Ovary (tissue), 10 donors: ENCODE measurements at regions of chr2 and their contacts with region 1.

Region 1: DNA sequence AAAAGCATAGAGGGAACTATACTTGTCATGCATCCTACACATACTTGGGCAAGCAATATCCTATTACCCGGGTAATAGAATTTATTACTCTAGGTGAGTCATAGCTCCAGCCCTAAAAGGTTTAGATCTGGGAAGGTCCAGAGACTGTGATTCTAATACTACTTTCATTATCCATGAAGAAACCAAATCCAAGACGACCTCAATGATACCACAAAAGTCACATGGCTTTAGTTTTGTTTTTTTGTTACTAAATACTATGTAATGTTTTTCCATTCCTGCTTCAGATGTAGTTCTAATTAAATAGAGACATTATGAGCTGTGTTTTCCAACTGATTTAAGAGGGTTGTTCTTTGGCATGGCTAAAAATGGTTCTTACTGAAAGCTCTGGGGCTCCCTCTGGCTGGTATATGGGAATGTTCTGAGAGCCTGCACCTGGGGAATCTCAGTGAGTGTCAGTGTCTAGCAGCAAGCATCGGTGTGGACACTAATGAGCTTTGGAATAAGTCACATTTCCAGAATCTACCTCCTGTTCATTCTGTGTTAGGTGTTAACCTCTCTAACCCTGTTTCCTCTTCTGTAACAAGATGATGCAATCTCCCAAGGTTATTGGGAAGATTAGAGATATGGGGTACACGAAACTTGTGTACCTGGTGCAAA is 20.5 kb upstream of the IL1RL2 start:
- DNase-seq: peak in 4 of 5 donors; percentile 30 to 64 (median 41)
- H3K4me3 ChIP-seq: no peak overlapping the region
- H3K27ac ChIP-seq: no peak overlapping the region
- H3K4me1 ChIP-seq: no peaks in the 10 kb centered on the region
- H3K27me3 ChIP-seq: no peaks in the 10 kb centered on the region
- CTCF ChIP-seq: peak; percentile 14 to 76 (median 65)
- EP300 ChIP-seq: no peak
- POLR2A ChIP-seq: no peak

Region 2: DNA sequence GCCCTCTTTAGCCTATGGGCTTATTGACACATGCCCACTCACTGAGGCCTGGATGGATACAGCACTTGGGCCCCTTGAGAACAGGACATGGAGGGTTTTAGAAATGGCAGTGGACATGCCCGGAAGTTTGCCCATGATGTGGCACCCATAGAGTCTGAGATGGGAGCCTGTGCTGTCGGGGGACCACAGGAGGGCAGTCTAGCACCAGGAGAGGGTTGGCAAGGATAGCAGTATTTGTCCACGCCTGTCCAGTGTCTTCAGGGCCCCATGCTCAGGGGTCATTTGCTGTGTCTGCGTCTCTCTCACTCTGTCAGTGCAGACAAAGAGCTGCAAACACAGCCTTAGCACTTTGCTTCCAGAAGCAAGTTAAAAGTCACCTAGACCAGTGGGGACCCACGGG is 69.2 kb after region 1 on chr2:
- intact Hi-C with region 1: loop called in 1 of 4 experiments (anchors 5 kb)
- DNase-seq: no peak
- H3K4me3 ChIP-seq: no peak overlapping the region
- H3K27ac ChIP-seq: no peak overlapping the region
- H3K4me1 ChIP-seq: peaks cover 2% of the 10 kb centered on the region
- H3K27me3 ChIP-seq: no peaks in the 10 kb centered on the region
- CTCF ChIP-seq: no peak
- EP300 ChIP-seq: no peak
- POLR2A ChIP-seq: no peak

Region 3: DNA sequence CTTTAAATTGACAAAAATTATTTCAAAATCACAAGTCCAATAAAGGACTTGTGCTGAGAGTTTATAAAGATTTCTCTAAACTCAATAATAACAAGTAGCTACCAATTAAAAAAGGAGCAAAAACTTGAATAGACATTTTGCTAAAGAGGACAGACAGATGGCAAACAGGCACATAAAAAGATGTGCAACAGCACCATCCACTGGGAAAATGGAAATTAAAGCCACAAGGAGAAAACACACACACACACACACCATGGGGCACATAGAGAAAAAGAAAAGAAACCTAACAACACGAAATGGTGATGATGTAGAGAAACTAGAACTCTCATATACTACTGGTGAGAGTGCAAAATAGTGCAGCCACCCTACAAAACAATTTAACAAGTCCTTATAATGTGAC is 294.1 kb after region 1 on chr2:
- intact Hi-C with region 1: no loop called
- DNase-seq: no peak
- H3K4me3 ChIP-seq: no peak overlapping the region
- H3K27ac ChIP-seq: no peak overlapping the region
- H3K4me1 ChIP-seq: no peaks in the 10 kb centered on the region
- H3K27me3 ChIP-seq: no peaks in the 10 kb centered on the region
- CTCF ChIP-seq: no peak
- EP300 ChIP-seq: no peak
- POLR2A ChIP-seq: no peak

Region 4: DNA sequence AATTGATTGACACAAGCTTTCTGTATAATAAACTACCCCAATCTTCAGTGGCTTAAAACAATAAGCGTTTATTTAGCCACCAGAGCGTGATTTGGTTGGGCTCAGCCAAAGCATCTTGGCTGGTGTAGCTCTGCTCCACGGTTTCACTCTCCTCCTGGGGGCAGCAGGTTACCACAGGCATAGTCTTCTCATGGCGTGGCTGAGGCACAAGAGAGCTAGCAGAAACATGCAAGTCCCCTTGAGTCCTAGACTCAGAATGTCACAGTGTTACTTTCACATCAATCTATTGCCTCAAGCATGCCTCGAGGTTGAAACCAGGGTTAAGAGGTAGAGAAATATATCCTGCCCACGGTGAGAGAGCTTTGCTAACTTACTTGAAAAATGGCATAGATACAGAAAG is 433.2 kb after region 1 on chr2:
- intact Hi-C with region 1: no loop called
- DNase-seq: no peak
- H3K4me3 ChIP-seq: no peak overlapping the region
- H3K27ac ChIP-seq: no peak overlapping the region
- H3K4me1 ChIP-seq: no peaks in the 10 kb centered on the region
- H3K27me3 ChIP-seq: no peaks in the 10 kb centered on the region
- CTCF ChIP-seq: no peak
- EP300 ChIP-seq: no peak
- POLR2A ChIP-seq: no peak